Colonic mucosa (tissue), 4 donors: ENCODE measurements at regions of chr9 and their contacts with region 1.

Region 1: GRCh38 chr9:3436629-3437420 is 89.0 kb downstream of the RFX3 start:
- DNase-seq: no peak
- H3K4me3 ChIP-seq: no peak overlapping the region
- H3K27ac ChIP-seq: no peak overlapping the region
- H3K4me1 ChIP-seq: no peaks in the 10 kb centered on the region
- H3K27me3 ChIP-seq: no peaks in the 10 kb centered on the region
- CTCF ChIP-seq: no peak

Region 2: GRCh38 chr9:3240656-3241268 is 196.1 kb before region 1 on chr9:
- intact Hi-C with region 1: loop called (anchors 10 kb)
- DNase-seq: peak; percentile 60
- H3K4me3 ChIP-seq: no peak overlapping the region
- H3K27ac ChIP-seq: no peak overlapping the region
- H3K4me1 ChIP-seq: no peaks in the 10 kb centered on the region
- H3K27me3 ChIP-seq: no peaks in the 10 kb centered on the region
- CTCF ChIP-seq: peak; percentile 56

Region 3: GRCh38 chr9:3331817-3332216 is 105.0 kb before region 1 on chr9:
- intact Hi-C with region 1: loop called (anchors 10 kb)
- DNase-seq: no peak
- H3K4me3 ChIP-seq: no peak overlapping the region
- H3K27ac ChIP-seq: no peak overlapping the region
- H3K4me1 ChIP-seq: no peaks in the 10 kb centered on the region
- H3K27me3 ChIP-seq: no peaks in the 10 kb centered on the region
- CTCF ChIP-seq: peak; percentile 15

Region 4: DNA sequence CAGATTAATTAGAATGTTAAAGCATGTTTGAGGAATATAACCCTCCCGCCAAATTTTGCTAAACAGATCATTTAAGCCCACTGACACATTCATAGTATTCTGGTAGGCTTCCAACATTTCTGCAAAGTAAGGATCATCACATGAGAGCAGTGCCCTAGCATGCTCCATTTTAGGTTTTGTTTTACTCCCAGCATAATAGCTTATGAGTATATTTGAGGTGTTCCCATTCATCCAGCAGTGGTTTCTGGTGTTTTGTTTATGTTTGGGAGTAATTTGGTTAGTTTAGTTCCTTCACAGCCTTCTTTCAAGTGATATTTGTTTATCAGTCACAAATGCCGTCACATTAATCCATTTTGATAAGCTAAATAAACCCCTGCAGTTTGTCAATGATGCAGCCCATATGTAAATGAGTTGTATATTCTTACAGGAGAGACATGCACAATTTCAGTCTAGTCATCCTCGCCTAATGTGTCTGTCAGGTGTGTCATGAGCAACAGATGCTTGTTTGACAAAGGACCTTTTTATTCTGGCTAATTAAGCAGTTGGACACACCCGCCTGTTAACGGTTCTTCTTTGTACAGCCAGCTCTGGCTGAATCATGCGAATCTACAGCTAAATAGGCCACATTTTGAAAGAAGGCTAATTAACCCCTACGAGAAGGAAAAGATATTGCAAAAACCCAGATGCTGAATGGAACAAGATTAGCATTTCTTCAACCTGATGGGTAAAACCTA is 35.4 kb before region 1 on chr9:
- intact Hi-C with region 1: no loop called
- DNase-seq: no peak
- H3K4me3 ChIP-seq: no peak overlapping the region
- H3K27ac ChIP-seq: no peak overlapping the region
- H3K4me1 ChIP-seq: no peaks in the 10 kb centered on the region
- H3K27me3 ChIP-seq: no peaks in the 10 kb centered on the region
- CTCF ChIP-seq: no peak